ENCODE measurements at regions of chr4 and their contacts with region 1.

Region 1: GRCh38 chr4:445410-445809 is 53.5 kb downstream of the ZNF721 start:
- DNase-seq: no peak
- ATAC-seq: no peak
- H3K4me3 ChIP-seq: no peak overlapping the region
- H3K4me1 ChIP-seq: no peaks in the 10 kb centered on the region
- CTCF ChIP-seq: no peak

Region 2: GRCh38 chr4:294732-295131 is 150.7 kb before region 1 on chr4:
- intact Hi-C with region 1: no loop called
- DNase-seq: no peak
- ATAC-seq: no peak
- H3K4me3 ChIP-seq: no peak overlapping the region
- H3K4me1 ChIP-seq: no peaks in the 10 kb centered on the region
- CTCF ChIP-seq: no peak

Region 3: GRCh38 chr4:384311-385010 is 60.9 kb before region 1 on chr4:
- intact Hi-C with region 1: loop called in 1 of 2 experiments (anchors 10 kb)
- DNase-seq: no peak
- ATAC-seq: no peak
- H3K4me3 ChIP-seq: no peak overlapping the region
- H3K4me1 ChIP-seq: no peaks in the 10 kb centered on the region
- CTCF ChIP-seq: no peak